BJ (cell line): ENCODE measurements at regions of chr20 and their contacts with region 1.

Region 1: GRCh38 chr20:31723319-31724078 is 831 bp upstream of the BCL2L1 start:
- DNase-seq: peak; percentile 77
- H3K4me3 ChIP-seq: peak overlapping the region; percentile 84
- H3K27me3 ChIP-seq: no peaks in the 10 kb centered on the region
- CTCF ChIP-seq: peak; percentile 91

Region 2: DNA sequence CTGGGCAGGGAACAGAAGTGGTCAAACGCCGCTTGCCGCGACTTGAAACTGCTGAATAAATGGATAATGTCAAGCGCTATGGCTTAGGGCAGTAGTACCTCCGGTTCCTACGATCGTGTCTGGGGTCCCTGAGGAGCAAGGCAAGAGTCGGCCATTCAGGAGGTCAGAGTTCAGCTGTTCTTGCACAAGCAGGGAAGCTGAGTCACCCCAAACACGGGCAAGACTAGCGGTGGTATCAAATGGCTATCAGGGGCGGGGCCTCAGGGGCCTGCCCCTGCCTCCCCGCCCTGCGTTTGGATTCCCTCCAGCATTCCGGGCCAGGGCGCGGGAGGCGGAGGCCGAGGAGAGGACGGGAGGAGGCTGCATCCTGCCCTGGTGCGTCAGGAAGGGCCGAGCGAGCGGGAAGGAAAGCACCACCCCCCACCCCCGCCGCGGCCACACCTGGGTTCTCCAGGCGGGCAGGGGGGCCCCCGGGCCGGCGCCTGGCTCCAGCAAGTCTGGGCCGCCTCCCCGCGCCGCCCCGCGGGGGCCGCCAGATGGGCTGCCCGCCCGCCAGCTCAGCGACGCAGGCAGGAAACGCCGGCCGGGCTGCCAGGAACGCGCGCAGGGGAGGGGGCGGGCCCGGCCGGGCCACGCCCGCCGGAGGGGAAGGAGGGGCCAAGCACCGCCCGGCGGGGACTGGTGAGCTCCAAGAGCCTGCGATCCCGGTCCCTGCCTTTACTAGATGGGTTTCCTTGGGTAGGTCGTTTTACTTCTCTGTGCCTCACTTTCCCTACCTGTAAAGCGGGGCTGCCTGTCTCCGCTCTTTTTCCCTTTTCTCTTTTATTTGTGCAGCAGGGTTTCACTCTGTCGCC is 150.6 kb before region 1 on chr20:
- CTCF ChIA-PET with region 1: interaction called, 3 read pairs
- POLR2A ChIA-PET with region 1: interaction called, 10 read pairs
- DNase-seq: peak; percentile 93
- H3K4me3 ChIP-seq: peak overlapping the region; percentile 50
- H3K27me3 ChIP-seq: no peaks in the 10 kb centered on the region
- CTCF ChIP-seq: no peak

Region 3: DNA sequence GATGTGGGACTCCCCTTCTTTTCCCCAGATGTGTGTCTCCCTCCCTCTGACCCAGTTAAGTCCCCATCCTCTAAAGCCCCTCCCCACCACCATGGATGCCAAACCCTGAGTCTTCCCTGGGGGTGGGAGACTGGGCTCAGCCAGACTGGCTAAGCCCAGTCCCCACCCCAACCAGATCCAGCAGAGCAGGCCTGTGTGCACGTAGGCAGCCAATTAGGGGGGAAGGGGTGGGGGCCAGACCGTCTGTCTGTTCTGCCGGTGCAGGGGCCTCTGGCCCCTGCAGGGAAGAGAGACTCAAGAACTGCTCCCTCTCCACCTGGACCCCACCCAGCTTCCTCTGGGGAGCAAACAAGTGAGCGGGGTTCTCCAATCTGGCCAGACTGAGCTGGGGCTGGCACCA is 85.2 kb before region 1 on chr20:
- CTCF ChIA-PET with region 1: interaction called, 73 read pairs
- POLR2A ChIA-PET with region 1: interaction called, 3 read pairs
- DNase-seq: no peak
- H3K4me3 ChIP-seq: no peak overlapping the region
- H3K27me3 ChIP-seq: peaks cover 3% of the 10 kb centered on the region; the same call in 1 of the 2 replicates
- CTCF ChIP-seq: no peak

Region 4: DNA sequence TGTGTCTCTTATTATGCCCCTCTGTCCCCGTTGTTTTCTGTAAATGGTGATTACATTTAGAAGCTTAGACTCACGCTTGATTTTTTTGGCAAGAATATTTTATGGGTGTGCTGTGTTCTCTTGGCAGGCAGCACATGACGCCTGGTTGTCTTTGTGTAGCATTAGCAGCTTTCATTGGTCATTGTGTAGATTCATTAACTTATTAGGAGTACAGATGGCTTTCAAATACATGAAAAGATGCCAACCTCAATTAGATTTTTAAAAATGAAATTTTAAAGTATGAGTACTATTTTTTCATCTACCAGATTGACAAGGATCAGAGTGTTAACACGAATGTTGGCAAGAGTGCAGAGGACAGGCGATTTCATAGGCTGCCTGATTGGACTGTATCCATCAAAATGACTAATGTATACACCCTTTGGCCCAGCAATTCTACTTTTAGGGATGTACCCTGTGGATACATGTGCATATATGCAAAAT is 70.5 kb before region 1 on chr20:
- CTCF ChIA-PET with region 1: interaction called, 287 read pairs
- POLR2A ChIA-PET with region 1: no interaction called
- DNase-seq: peak; percentile 39
- H3K4me3 ChIP-seq: no peak overlapping the region
- H3K27me3 ChIP-seq: no peaks in the 10 kb centered on the region
- CTCF ChIP-seq: no peak

Region 5: DNA sequence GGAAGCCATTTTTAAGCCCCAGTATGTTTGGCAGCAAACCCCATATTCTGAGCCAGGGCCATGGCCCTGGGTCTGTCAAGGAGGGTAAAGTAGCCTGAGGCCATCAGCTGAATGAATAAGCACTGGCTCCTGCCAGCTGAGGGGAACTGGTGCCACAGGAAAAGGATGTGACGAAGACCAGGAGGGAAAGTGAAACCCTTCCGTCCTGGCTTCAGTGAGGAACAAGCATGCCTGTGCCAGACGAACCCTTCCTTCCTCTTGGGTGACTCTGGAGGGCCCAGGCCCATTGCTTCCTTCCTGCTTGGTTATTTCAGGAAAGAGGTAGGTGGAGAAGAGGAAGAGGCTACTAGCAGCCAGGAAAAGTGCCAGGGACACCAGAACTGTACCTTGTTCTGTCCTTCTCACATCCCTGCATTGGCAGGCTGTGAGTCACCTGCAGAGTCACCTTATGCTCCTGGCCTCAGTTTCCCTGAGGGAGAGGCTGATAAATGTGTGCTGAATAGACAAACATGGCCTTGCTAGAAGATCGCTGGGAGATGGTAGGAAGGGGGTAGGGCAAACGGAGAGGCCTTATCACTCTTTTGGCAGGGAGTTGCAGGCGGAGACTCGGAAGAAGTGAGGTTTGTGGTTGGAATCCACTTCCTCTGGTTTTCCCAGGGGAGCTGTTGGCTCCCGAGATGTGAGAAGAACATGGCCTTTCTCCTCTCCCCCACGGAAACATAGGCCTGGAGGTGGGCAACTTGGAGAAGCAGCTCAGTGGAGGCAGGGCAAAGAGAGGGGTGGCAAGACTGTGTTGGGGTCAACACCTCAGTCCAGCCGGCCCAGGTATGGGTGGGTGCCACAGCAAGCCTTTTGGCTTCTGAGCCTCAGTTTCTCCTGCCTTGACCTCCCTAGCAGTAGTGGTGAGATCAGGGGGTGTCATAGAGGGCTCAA is 48.3 kb before region 1 on chr20:
- CTCF ChIA-PET with region 1: interaction called, 18 read pairs
- POLR2A ChIA-PET with region 1: no interaction called
- DNase-seq: no peak
- H3K4me3 ChIP-seq: no peak overlapping the region
- H3K27me3 ChIP-seq: no peaks in the 10 kb centered on the region
- CTCF ChIP-seq: no peak